Naive thymus-derived CD4-positive, alpha-beta T cell (primary cell): ENCODE measurements at regions of chr15 and their contacts with region 1.

Region 1: GRCh38 chr15:35444557-35445204 is 101.3 kb downstream of the DPH6 start:
- DNase-seq: peak in 2 of 9 donors; percentile 1
- ATAC-seq: no peak
- H3K4me3 ChIP-seq: no peak overlapping the region
- H3K4me3 Mint-ChIP-seq: no peak overlapping the region
- H3K27ac ChIP-seq: no peak overlapping the region
- H3K27ac Mint-ChIP-seq: no peak overlapping the region
- H3K4me1 ChIP-seq: no peaks in the 10 kb centered on the region
- H3K4me1 Mint-ChIP-seq: no peaks in the 10 kb centered on the region
- H3K27me3 ChIP-seq: no peaks in the 10 kb centered on the region
- H3K27me3 Mint-ChIP-seq: no peaks in the 10 kb centered on the region

Region 2: GRCh38 chr15:35078221-35078915 is 366.3 kb before region 1 on chr15:
- CTCF ChIA-PET with region 1: interaction called, 9 read pairs
- POLR2A ChIA-PET with region 1: no interaction called
- intact Hi-C with region 1: loop called in 1 of 2 experiments (anchors 1 kb)
- DNase-seq: peak in 6 of 9 donors; percentile 17 to 44 (median 22)
- ATAC-seq: peak; percentile 62
- H3K4me3 ChIP-seq: no peak overlapping the region
- H3K4me3 Mint-ChIP-seq: no peak overlapping the region
- H3K27ac ChIP-seq: no peak overlapping the region
- H3K27ac Mint-ChIP-seq: no peak overlapping the region
- H3K4me1 ChIP-seq: no peaks in the 10 kb centered on the region
- H3K4me1 Mint-ChIP-seq: no peaks in the 10 kb centered on the region
- H3K27me3 ChIP-seq: no peaks in the 10 kb centered on the region
- H3K27me3 Mint-ChIP-seq: peaks cover 0 to 24% (median 15%) of the 10 kb centered on the region in 5 donors

Region 3: GRCh38 chr15:35289024-35289617 is 155.6 kb before region 1 on chr15:
- CTCF ChIA-PET with region 1: no interaction called
- POLR2A ChIA-PET with region 1: no interaction called
- intact Hi-C with region 1: loop called in 1 of 2 experiments (anchors 5 kb)
- DNase-seq: no peak
- ATAC-seq: no peak
- H3K4me3 ChIP-seq: no peak overlapping the region
- H3K4me3 Mint-ChIP-seq: no peak overlapping the region
- H3K27ac ChIP-seq: no peak overlapping the region
- H3K27ac Mint-ChIP-seq: no peak overlapping the region
- H3K4me1 ChIP-seq: no peaks in the 10 kb centered on the region
- H3K4me1 Mint-ChIP-seq: no peaks in the 10 kb centered on the region
- H3K27me3 ChIP-seq: no peaks in the 10 kb centered on the region
- H3K27me3 Mint-ChIP-seq: no peaks in the 10 kb centered on the region